CD4-positive, alpha-beta T cell (primary cell): ENCODE measurements at regions of chr3 and their contacts with region 1.

Region 1: GRCh38 chr3:72738752-72739530 is 109.3 kb downstream of the SHQ1 start:
- DNase-seq: peak; percentile 63 to 87 (median 74)
- ATAC-seq: peak; percentile 89
- H3K4me3 ChIP-seq: peak overlapping the region; percentile 76
- H3K4me3 Mint-ChIP-seq: peak overlapping the region; percentile 95
- H3K27ac ChIP-seq: peak overlapping the region; percentile 54
- H3K27ac Mint-ChIP-seq: peak overlapping the region; percentile 99
- H3K4me1 ChIP-seq: peaks cover 25% of the 10 kb centered on the region
- H3K4me1 Mint-ChIP-seq: peaks cover 36% of the 10 kb centered on the region
- H3K27me3 ChIP-seq: no peaks in the 10 kb centered on the region
- H3K27me3 Mint-ChIP-seq: no peaks in the 10 kb centered on the region
- CTCF ChIP-seq: no peak

Region 2: GRCh38 chr3:72604328-72604727 is 134.6 kb before region 1 on chr3:
- CTCF ChIA-PET with region 1: no interaction called
- POLR2A ChIA-PET with region 1: no interaction called
- intact Hi-C with region 1: no loop called
- DNase-seq: no peak
- ATAC-seq: no peak
- H3K4me3 ChIP-seq: no peak overlapping the region
- H3K4me3 Mint-ChIP-seq: no peak overlapping the region
- H3K27ac ChIP-seq: no peak overlapping the region
- H3K27ac Mint-ChIP-seq: no peak overlapping the region
- H3K4me1 ChIP-seq: no peaks in the 10 kb centered on the region
- H3K4me1 Mint-ChIP-seq: no peaks in the 10 kb centered on the region
- H3K27me3 ChIP-seq: no peaks in the 10 kb centered on the region
- H3K27me3 Mint-ChIP-seq: no peaks in the 10 kb centered on the region
- CTCF ChIP-seq: no peak

Region 3: DNA sequence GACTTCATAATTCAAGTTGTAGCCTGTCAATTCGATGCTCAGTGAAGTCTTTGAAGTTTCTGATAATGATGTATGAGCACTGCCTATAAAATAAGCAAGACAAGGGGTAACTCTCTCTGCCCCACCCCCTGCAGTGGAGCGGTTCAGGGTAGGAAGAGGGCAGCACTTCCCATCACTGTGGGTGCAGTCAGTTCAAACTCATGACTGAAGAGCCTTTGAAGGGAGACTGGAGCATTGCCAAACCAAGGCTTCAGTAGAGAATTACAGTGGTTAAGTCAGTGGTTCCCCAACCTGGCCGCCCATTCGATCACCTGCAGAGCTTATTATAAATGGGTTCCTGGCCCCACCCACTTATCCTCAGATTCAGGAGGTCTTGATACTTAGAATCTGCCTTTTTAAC is 81.3 kb before region 1 on chr3:
- CTCF ChIA-PET with region 1: no interaction called
- POLR2A ChIA-PET with region 1: interaction called, 5 read pairs
- intact Hi-C with region 1: loop called in 1 of 2 experiments (anchors 5 kb)
- DNase-seq: peak; percentile 17 to 85 (median 50)
- ATAC-seq: peak; percentile 98
- H3K4me3 ChIP-seq: no peak overlapping the region
- H3K4me3 Mint-ChIP-seq: peak overlapping the region; percentile 30
- H3K27ac ChIP-seq: no peak overlapping the region
- H3K27ac Mint-ChIP-seq: peak overlapping the region; percentile 4
- H3K4me1 ChIP-seq: peaks cover 11% of the 10 kb centered on the region
- H3K4me1 Mint-ChIP-seq: peaks cover 18% of the 10 kb centered on the region
- H3K27me3 ChIP-seq: peaks cover 6 to 7% of the 10 kb centered on the region in 2 experiments
- H3K27me3 Mint-ChIP-seq: peaks cover 4% of the 10 kb centered on the region
- CTCF ChIP-seq: no peak

Region 4: DNA sequence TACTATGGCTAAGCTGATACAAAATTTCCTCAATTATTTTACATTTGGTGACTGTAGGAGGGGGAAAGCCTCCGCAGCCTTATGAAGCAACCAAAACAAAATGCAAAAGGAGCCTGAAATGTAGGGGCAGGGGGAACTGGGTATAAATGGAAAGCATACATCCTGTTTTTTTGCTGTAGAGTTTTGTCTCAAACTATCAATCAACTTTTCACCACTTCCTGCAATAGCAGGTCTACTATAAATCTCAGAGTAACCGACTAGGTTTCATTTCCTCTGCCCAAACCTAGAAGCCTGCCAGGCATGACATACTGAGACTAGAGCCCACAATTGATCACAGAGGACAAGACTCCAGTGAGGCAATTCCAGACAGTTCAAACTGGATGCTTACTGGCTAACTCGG is 18.0 kb after region 1 on chr3:
- CTCF ChIA-PET with region 1: no interaction called
- POLR2A ChIA-PET with region 1: interaction called, 89 read pairs
- intact Hi-C with region 1: loop called (anchors 2 kb)
- DNase-seq: peak in 13 of 14 experiments; percentile 12 to 89 (median 35)
- ATAC-seq: peak; percentile 96
- H3K4me3 ChIP-seq: peak overlapping the region; percentile 26
- H3K4me3 Mint-ChIP-seq: peak overlapping the region; percentile 68
- H3K27ac ChIP-seq: peak overlapping the region; percentile 42 to 63
- H3K27ac Mint-ChIP-seq: peak overlapping the region; percentile 85
- H3K4me1 ChIP-seq: peaks cover 22% of the 10 kb centered on the region
- H3K4me1 Mint-ChIP-seq: peaks cover 75% of the 10 kb centered on the region
- H3K27me3 ChIP-seq: no peaks in the 10 kb centered on the region
- H3K27me3 Mint-ChIP-seq: no peaks in the 10 kb centered on the region
- CTCF ChIP-seq: no peak